ENCODE measurements at regions of chr2 and their contacts with region 1.

Region 1: GRCh38 chr2:187581125-187581896 is 27.1 kb upstream of the TFPI start:
- DNase-seq: no peak

Region 2: DNA sequence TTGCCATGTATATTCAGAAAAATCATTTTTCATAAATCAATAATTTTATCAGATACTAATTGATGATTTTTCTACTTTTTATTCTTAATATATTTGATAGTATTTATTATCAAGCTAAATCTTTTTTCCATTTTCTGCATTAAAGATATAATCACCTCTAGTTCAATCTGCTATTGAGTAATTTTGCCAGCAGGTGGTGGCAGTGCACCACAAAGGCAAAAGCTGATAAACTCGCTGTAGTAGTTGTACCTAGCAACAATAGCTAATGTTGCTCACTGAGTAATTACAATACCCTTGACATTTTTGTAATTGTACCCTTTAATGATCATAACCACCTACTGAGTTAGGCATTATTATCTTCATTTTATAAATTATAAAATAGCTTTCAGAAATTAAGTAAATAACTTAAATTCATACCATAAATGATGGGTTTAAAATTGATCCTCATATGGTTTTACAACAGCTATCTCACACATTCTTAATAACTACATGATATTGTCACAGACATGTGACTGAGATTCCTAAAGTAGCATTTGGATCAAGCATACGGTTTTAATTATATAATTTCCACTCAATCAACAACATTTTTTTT is 81.3 kb before region 1 on chr2:
- intact Hi-C with region 1: loop called (anchors 1 kb)
- DNase-seq: peak in 9 of 10 donors; percentile 27 to 88 (median 54)

Region 3: GRCh38 chr2:187842978-187843847 is 261.9 kb after region 1 on chr2:
- intact Hi-C with region 1: loop called (anchors 1 kb)
- DNase-seq: no peak

Region 4: GRCh38 chr2:188512456-188512855 is 931.1 kb after region 1 on chr2:
- intact Hi-C with region 1: loop called (anchors 5 kb)
- DNase-seq: no peak